IMR-90 (cell line): ENCODE measurements at regions of chr2 and their contacts with region 1.

Region 1: GRCh38 chr2:184879671-184880070 is 281.3 kb downstream of the ZNF804A start:
- DNase-seq: no peak
- ATAC-seq: no peak
- H3K4me3 ChIP-seq: no peak overlapping the region
- H3K27ac ChIP-seq: no peak overlapping the region
- H3K4me1 ChIP-seq: no peaks in the 10 kb centered on the region
- H3K27me3 ChIP-seq: no peaks in the 10 kb centered on the region
- CTCF ChIP-seq: no peak
- POLR2A ChIP-seq: no peak
- RAD21 ChIP-seq: no peak

Region 2: GRCh38 chr2:184765112-184765895 is 114.4 kb before region 1 on chr2:
- CTCF ChIA-PET with region 1: no interaction called
- POLR2A ChIA-PET with region 1: no interaction called
- dilution Hi-C with region 1: no loop called
- in situ Hi-C with region 1: no loop called
- intact Hi-C with region 1: loop called (anchors 10 kb)
- DNase-seq: no peak
- ATAC-seq: no peak
- H3K4me3 ChIP-seq: peak overlapping the region; percentile 23; the same call in 1 of the 2 replicates
- H3K27ac ChIP-seq: no peak overlapping the region
- H3K4me1 ChIP-seq: no peaks in the 10 kb centered on the region
- H3K27me3 ChIP-seq: no peaks in the 10 kb centered on the region
- CTCF ChIP-seq: no peak
- POLR2A ChIP-seq: no peak
- RAD21 ChIP-seq: no peak

Region 3: GRCh38 chr2:184993746-184994145 is 114.1 kb after region 1 on chr2:
- CTCF ChIA-PET with region 1: no interaction called
- POLR2A ChIA-PET with region 1: no interaction called
- dilution Hi-C with region 1: no loop called
- in situ Hi-C with region 1: no loop called
- intact Hi-C with region 1: no loop called
- DNase-seq: no peak
- ATAC-seq: no peak
- H3K4me3 ChIP-seq: no peak overlapping the region
- H3K27ac ChIP-seq: no peak overlapping the region
- H3K4me1 ChIP-seq: no peaks in the 10 kb centered on the region
- H3K27me3 ChIP-seq: no peaks in the 10 kb centered on the region
- CTCF ChIP-seq: no peak
- POLR2A ChIP-seq: no peak
- RAD21 ChIP-seq: no peak

Region 4: GRCh38 chr2:185625604-185626003 is 745.9 kb after region 1 on chr2:
- CTCF ChIA-PET with region 1: no interaction called
- POLR2A ChIA-PET with region 1: no interaction called
- dilution Hi-C with region 1: no loop called
- in situ Hi-C with region 1: no loop called
- intact Hi-C with region 1: no loop called
- DNase-seq: no peak
- ATAC-seq: no peak
- H3K4me3 ChIP-seq: no peak overlapping the region
- H3K27ac ChIP-seq: no peak overlapping the region
- H3K4me1 ChIP-seq: no peaks in the 10 kb centered on the region
- H3K27me3 ChIP-seq: no peaks in the 10 kb centered on the region
- CTCF ChIP-seq: no peak
- POLR2A ChIP-seq: no peak
- RAD21 ChIP-seq: no peak